ENCODE measurements at regions of chrX and their contacts with region 1.

Region 1: GRCh38 chrX:15674841-15675489 is 10.4 kb upstream of the CLTRN start:
- DNase-seq: peak; percentile 81
- H3K4me3 Mint-ChIP-seq: no peak overlapping the region
- H3K27ac Mint-ChIP-seq: no peak overlapping the region
- H3K4me1 Mint-ChIP-seq: peaks cover 17% of the 10 kb centered on the region
- H3K27me3 Mint-ChIP-seq: peaks cover 3% of the 10 kb centered on the region

Region 2: DNA sequence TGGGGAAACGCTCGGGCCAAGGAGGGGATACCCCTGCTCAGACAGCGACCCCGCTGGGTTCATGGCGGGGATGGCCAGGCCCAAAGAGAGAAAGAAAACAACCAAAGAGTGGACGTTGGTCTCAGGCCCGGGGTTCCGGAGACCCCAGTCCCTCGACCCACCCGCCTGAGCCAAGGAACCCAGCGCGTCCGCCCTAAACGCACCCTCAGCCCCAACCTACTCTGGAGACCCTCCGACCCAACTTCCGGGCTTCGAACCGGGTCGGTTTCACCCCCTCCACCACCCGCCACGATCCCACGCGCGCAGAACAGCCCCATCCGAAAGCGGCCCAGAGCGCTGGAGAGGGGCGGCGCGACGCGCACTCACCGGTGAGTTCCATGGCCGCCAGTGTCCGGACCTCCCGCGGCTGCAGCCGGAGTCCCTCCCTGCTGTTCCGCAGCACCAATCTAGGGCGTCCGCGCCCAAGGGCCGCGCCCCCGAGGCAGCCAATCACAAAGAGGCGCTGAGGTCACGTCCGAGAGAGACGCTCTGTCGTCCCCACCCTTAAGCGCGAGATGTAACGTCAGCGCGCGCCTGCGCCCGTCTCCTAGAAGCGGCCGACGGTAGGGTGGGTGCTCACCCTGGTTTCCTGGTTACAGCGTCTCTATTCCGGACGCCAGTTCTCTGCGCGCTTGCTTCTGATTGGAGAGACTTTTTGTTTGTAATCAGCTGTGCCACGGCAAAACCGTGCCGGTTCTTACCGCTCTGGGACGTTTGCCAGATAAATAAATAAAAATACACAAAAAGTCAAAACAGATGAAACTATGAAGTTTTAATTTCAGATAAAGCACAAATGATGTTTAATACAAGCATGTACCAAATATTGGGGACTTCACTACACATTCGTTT is 339.6 kb before region 1 on chrX and contains the start of gene PIGA:
- intact Hi-C with region 1: loop called (anchors 2 kb)
- DNase-seq: peak; percentile 90
- H3K4me3 Mint-ChIP-seq: peak within 1 kb of the TSS; percentile 89
- H3K27ac Mint-ChIP-seq: peak within 1 kb of the TSS; percentile 89
- H3K4me1 Mint-ChIP-seq: peaks cover 12% of the 10 kb centered on the region
- H3K27me3 Mint-ChIP-seq: peaks cover 6% of the 10 kb centered on the region
- total RNA-seq, gene PIGA: 40.6 and 43.3 TPM in 2 replicates

Region 3: GRCh38 chrX:15493118-15493962 is 181.6 kb before region 1 on chrX and contains the start of gene PIR:
- intact Hi-C with region 1: loop called (anchors 5 kb)
- DNase-seq: peak; percentile 55
- H3K4me3 Mint-ChIP-seq: peak within 1 kb of the TSS; percentile 81
- H3K27ac Mint-ChIP-seq: peak within 1 kb of the TSS; percentile 47
- H3K4me1 Mint-ChIP-seq: peaks cover 20% of the 10 kb centered on the region
- H3K27me3 Mint-ChIP-seq: peaks cover 5% of the 10 kb centered on the region
- total RNA-seq, gene PIR: 5.1 and 5.9 TPM in 2 replicates

Region 4: DNA sequence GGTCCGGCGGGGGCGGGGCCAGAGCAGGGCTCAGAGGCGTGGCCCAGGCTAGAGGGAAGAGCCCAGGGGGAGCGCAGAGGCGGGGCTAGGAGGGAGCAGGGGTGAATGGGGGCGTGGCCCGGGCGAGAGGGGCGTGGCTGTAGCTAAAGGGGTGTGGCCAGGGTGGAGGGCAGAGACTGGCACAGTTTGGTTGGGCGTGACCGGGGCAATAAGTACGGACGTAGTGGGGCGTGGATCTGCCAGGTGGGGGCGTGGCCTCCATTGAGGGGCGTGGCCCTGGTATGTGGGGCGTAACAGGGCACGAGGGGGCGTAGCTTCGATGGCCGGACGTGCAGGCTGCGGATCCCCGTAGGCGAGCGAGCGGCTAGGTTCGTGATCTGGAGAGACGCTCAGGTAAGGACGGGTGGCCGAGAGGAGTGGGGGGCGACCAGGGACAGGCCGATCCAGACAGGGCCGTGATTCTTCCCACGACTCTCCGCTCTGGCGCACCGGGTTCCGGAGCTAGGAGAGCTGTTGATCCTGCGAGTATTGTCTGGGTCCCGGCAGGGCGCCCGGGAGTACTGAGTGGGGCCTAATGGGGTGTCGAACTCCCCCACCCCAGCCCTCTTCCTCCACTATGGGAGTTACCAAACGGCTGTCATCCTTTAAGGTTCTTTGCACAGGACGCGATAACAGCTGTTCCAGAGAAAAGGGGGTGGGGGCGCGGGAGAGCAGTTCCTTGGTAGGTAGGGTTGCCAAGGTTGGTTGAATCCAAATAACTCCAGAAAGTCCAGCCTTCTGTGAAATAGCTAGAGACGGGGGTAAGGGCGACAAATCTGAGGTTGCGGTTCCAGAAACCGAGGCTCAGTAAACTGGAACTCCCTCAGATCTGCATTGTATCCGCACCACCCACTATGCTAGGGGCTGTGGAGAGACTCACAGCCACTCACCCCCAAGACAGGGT is 63.3 kb after region 1 on chrX and contains the start of gene CA5B:
- intact Hi-C with region 1: loop called (anchors 1 kb)
- DNase-seq: peak; percentile 94
- H3K4me3 Mint-ChIP-seq: peak within 1 kb of the TSS; percentile 82
- H3K27ac Mint-ChIP-seq: peak within 1 kb of the TSS; percentile 75
- H3K4me1 Mint-ChIP-seq: peaks cover 23% of the 10 kb centered on the region
- H3K27me3 Mint-ChIP-seq: no peaks in the 10 kb centered on the region
- total RNA-seq, gene CA5B: 5.2 and 8.0 TPM in 2 replicates

Region 5: DNA sequence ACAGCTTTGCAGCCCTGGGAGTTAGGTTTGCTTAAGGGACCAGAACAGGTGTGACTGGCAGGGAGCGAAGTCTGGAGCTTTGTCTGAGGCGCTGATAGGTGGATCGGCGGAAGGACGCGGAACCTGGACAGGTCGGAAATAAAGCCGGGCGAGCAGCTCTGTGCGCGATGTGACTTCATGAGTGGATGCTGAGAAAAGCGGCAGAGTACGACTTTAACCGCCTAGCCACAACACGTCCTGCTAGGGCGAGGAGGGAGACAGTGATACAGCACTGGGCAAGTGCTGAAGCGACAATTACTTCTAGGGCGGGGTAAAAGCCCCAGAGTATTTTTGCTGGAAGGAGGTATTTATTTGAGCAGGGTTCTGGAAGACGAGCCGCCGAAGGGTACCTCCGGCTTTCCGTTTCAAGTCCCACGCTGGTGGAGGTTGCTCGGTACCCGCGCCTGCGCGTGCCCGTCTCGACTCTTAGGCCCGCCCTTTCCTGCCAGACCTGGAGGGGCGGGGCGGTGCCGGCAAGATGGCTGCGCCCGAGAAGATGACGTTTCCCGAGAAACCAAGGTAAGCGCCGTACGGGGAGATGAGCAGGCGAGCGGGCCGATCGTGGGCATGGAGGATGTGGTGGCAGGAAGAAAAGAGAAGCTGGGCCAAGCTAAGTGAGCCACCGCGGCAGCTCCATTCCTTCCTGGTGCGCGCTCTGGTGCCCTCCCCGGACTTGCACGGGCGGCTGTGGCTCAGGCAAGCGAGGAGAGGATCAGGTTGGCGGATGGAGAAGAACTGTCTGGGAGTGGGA is 115.2 kb after region 1 on chrX and contains the start of gene ZRSR2:
- intact Hi-C with region 1: loop called (anchors 1 kb)
- DNase-seq: peak; percentile 83
- H3K4me3 Mint-ChIP-seq: no peak within 1 kb of the TSS
- H3K27ac Mint-ChIP-seq: no peak within 1 kb of the TSS
- H3K4me1 Mint-ChIP-seq: peaks cover 12% of the 10 kb centered on the region
- H3K27me3 Mint-ChIP-seq: no peaks in the 10 kb centered on the region
- total RNA-seq, gene ZRSR2: 18.7 and 20.3 TPM in 2 replicates

Region 6: GRCh38 chrX:15854712-15855567 is 180.0 kb after region 1 on chrX and contains the start of gene AP1S2:
- intact Hi-C with region 1: loop called (anchors 1 kb)
- DNase-seq: peak; percentile 90
- H3K4me3 Mint-ChIP-seq: peak within 1 kb of the TSS; percentile 86
- H3K27ac Mint-ChIP-seq: peak within 1 kb of the TSS; percentile 90
- H3K4me1 Mint-ChIP-seq: peaks cover 18% of the 10 kb centered on the region
- H3K27me3 Mint-ChIP-seq: no peaks in the 10 kb centered on the region
- total RNA-seq, gene AP1S2: 33.8 and 35.5 TPM in 2 replicates

Region 7: DNA sequence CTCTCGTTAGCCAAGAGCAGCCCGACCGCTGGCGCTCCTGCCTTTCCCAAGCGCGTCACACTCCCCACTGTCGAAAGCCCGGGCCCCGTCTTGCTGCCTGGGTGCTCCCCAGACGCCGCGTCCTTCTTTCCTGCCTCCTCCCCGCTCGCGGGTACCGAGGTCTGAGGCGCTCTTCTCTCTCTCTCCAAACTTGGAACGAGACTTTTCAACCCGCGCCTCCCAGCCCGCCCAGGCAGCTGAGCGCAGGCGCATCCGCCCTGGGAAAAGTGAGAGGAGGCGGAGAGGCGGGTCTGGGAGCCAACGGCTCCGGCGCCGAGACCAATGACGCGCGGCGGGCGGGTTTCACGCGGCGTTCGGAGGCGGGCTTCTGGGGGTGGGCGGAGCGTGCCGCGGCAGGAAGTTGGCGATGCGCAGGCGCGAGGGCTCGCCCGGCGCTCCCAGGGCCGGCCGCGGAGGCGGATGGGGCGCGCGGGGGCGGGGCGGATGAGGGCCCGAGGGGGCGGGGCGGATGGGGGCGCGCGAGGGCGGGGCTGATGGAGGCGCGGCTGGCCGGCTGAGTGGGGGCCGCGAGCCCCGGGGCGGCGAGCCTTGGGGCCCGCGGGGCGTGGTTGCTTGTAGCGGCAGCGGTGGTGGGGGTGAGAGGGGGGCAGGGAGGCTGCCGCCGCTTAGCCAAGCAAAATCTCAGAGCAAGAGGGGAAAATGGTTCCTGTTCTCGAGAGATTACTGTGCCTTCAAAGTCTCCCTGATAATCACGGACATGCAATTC is 1195.3 kb after region 1 on chrX and contains the start of gene RBBP7:
- intact Hi-C with region 1: loop called (anchors 10 kb)
- DNase-seq: peak; percentile 87
- H3K4me3 Mint-ChIP-seq: peak within 1 kb of the TSS; percentile 96
- H3K27ac Mint-ChIP-seq: peak within 1 kb of the TSS; percentile 98
- H3K4me1 Mint-ChIP-seq: peaks cover 19% of the 10 kb centered on the region
- H3K27me3 Mint-ChIP-seq: peaks cover 5% of the 10 kb centered on the region
- total RNA-seq, gene RBBP7: 163 and 164 TPM in 2 replicates

Measured in activated T-helper 2 cell treated with anti-CD3 and anti-CD28 coated beads, Interferon-gamma antibody, Interleukin-2, Interleukin-4, amounts not matched to agents 10 μg/mL and 5 μg/mL and 100 μg/mL, durations not matched to agents 14 hours and 24 hours and 36 hours (primary cell).